Sigmoid colon (tissue), 7 donors: ENCODE measurements at regions of chr13 and their contacts with region 1.

Region 1: GRCh38 chr13:24228852-24229458 is 68.4 kb downstream of the SPATA13 start:
- DNase-seq: no peak
- H3K4me3 ChIP-seq: no peak overlapping the region
- H3K27ac ChIP-seq: no peak overlapping the region
- H3K4me1 ChIP-seq: peaks cover 0 to 11% (median 5%) of the 10 kb centered on the region in 4 donors
- H3K27me3 ChIP-seq: no peaks in the 10 kb centered on the region
- CTCF ChIP-seq: peak; percentile 50 to 87 (median 64)
- EP300 ChIP-seq: no peak
- POLR2A ChIP-seq: no peak

Region 2: DNA sequence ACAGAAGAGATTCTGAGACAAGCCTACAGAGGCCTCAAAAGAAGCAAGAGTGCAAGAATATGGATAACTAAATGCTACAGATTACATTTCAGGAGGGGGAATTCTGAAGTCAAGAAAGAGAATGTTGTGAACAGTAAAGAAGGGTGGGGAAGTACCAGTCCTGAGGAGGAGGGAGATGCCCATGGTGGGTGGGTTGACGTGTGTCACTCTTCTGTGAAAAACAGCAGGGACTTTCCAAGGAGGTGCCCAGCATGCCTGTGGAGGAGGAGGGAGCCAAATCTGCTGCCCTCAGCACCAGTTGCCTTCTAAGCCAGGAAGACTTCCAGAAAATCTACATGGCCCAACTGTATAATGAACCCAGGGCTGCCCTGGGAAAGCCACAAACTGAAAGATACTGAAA is 960.5 kb before region 1 on chr13:
- intact Hi-C with region 1: no loop called
- DNase-seq: no peak
- H3K4me3 ChIP-seq: no peak overlapping the region
- H3K27ac ChIP-seq: no peak overlapping the region
- H3K4me1 ChIP-seq: no peaks in the 10 kb centered on the region
- H3K27me3 ChIP-seq: no peaks in the 10 kb centered on the region
- CTCF ChIP-seq: no peak
- EP300 ChIP-seq: no peak
- POLR2A ChIP-seq: no peak

Region 3: DNA sequence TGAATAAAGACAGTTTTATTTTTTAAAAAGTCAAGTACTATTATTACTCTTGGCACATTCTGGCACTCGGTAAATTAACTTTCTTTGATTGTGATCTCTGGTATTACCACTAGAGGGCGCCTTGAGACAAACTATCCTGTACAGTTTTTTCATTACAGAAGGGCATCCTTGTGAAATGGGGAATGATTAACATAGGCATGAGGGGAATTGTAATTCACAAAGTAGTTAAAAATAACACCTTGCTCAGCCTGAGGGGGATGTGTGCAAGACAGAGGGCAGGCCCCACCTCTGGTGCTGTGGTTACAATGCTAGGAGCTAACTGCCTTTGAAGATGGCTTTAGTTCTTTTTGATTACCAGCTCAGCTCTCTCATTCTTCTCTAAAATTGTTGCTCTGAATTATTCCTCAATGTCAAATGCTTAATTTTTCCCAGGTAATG is 307.5 kb before region 1 on chr13:
- intact Hi-C with region 1: loop called (anchors 5 kb)
- DNase-seq: no peak
- H3K4me3 ChIP-seq: no peak overlapping the region
- H3K27ac ChIP-seq: no peak overlapping the region
- H3K4me1 ChIP-seq: no peaks in the 10 kb centered on the region
- H3K27me3 ChIP-seq: peaks cover 0 to under 1% (median 0%) of the 10 kb centered on the region in 3 donors
- CTCF ChIP-seq: peak in 3 of 4 experiments; percentile 36 to 52 (median 37)
- EP300 ChIP-seq: no peak
- POLR2A ChIP-seq: no peak

Region 4: DNA sequence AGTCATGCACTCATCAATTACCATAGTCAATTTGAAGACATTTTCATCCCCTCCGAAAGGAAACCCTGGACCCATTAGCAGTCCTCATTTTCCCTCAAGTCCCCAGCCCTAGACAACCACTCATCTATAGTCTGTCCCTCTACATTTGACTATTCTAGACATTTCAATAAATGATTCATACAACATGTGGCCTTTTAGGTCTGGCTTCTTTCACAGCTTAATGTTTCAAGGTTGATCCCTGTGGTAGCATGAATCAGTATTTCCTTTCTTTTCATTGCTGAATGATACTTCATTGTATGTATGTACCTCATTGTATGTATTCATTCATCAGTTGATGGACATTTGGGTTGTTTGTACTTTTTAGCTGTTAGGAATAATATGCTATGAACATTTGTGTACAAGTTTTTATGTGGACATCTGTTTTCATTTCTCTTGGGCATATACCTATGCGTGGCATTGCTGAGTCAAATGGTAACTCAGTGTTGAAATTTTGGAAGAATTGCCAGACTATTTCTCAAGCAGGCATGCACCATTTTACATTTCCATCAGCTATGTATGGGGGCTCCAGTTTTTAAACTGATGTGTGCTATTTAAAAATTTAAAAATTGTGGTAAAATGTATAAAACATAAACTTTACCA is 50.0 kb before region 1 on chr13:
- intact Hi-C with region 1: no loop called
- DNase-seq: no peak
- H3K4me3 ChIP-seq: no peak overlapping the region
- H3K27ac ChIP-seq: no peak overlapping the region
- H3K4me1 ChIP-seq: peaks cover 0 to 16% (median 5%) of the 10 kb centered on the region in 4 donors
- H3K27me3 ChIP-seq: no peaks in the 10 kb centered on the region
- CTCF ChIP-seq: no peak
- EP300 ChIP-seq: no peak
- POLR2A ChIP-seq: no peak